ENCODE measurements at regions of chr14 and their contacts with region 1.

Region 1: DNA sequence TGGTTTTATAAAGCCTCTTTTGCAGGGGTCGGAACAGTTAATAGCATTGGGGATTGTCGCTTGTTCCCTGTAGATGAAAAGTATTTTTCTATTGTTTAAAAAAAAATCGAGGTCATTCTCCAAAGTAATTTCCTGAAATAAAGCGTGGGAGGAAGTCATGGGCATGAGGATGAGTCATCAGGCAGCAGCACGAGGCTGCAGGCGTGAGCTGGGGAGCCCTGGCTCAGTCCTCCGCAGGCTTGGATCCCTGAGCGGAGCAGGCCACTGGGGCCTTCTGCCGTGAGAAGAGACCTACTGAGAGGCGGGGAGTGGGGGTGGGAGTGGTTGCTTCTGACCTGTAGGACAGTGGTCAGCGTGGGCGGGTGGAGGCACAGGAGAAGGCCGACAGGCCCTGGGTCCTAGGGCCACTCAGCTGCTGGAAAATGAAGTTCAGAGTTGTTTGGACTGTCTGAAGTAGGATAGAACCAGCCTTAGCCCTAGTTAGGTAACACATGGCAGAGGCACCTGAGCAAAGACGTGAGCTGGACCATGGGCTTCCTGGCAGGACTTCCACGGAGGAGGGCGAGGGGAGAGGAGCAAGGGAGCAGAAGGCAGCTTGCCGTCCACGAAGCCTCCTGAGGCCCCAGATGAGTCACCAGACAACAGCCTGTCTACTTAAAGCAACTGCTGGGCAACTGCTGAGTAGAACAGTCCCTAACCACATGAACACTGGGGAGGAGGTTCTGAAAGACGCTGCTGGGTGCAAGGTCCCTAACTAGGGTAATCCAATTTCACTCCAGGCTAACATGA is 21.1 kb upstream of the LGALS3 start:
- DNase-seq: peak in 6 of 35 experiments; percentile 6 to 51 (median 28)
- ATAC-seq: peak; percentile 52 to 78 (median 66)
- H3K4me3 ChIP-seq: no peak overlapping the region
- H3K4me3 Mint-ChIP-seq: no peak overlapping the region
- H3K27ac ChIP-seq: peak overlapping the region; percentile 78
- H3K27ac Mint-ChIP-seq: peak overlapping the region; percentile 74 to 89
- H3K4me1 ChIP-seq: peaks cover 4 to 39% of the 10 kb centered on the region in 2 experiments
- H3K4me1 Mint-ChIP-seq: peaks cover 21 to 40% (median 33%) of the 10 kb centered on the region in 3 donors
- H3K27me3 ChIP-seq: no peaks in the 10 kb centered on the region
- H3K27me3 Mint-ChIP-seq: no peaks in the 10 kb centered on the region

Region 2: DNA sequence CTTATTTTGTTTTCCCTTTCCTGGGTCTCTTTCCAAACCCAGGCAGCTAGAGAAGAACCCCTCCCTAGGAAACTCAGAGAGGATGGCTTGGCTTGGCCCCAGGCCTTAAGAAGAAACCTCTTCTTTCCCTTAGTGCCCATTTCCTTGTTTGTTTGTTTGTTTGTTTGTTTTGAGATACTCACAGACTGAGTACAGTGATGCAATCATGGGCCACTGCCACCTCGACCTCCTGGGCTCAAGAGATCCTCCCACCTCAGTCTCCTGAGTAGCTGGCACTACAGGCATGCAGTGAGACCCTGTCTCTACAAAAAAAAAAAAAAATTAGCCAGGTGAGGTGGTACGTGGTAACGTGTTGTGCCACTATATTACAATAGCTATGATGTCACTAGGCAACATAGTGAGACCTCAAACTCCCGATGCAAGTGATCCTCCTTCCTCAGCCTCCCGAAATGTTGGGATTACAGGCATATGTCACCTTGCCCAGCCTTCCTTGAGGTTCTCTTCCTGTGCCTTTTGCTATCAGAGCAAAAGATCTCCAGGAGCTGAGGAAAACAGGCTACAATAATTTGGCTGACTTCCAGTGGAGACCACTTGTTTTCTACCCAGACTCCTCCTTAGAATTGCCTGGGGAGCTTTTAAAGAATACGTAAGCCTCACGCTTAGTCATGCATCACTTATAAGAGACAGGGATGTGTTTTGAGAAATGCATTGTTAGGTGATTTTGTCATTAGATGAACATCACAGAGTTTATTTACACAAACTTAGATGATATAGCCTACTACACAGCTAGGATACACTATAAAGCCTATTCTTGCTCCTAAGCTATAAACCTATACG is 13.4 kb before region 1 on chr14:
- CTCF ChIA-PET with region 1: interaction called, 8 to 14 read pairs
- POLR2A ChIA-PET with region 1: interaction called in 1 of 2 experiments, 3 read pairs
- DNase-seq: no peak
- ATAC-seq: no peak
- H3K4me3 ChIP-seq: no peak overlapping the region
- H3K4me3 Mint-ChIP-seq: no peak overlapping the region
- H3K27ac ChIP-seq: no peak overlapping the region
- H3K27ac Mint-ChIP-seq: no peak overlapping the region
- H3K4me1 ChIP-seq: peaks cover 0 to 17% of the 10 kb centered on the region in 2 experiments
- H3K4me1 Mint-ChIP-seq: peaks cover 9 to 20% (median 20%) of the 10 kb centered on the region in 3 donors
- H3K27me3 ChIP-seq: no peaks in the 10 kb centered on the region
- H3K27me3 Mint-ChIP-seq: no peaks in the 10 kb centered on the region

Region 3: DNA sequence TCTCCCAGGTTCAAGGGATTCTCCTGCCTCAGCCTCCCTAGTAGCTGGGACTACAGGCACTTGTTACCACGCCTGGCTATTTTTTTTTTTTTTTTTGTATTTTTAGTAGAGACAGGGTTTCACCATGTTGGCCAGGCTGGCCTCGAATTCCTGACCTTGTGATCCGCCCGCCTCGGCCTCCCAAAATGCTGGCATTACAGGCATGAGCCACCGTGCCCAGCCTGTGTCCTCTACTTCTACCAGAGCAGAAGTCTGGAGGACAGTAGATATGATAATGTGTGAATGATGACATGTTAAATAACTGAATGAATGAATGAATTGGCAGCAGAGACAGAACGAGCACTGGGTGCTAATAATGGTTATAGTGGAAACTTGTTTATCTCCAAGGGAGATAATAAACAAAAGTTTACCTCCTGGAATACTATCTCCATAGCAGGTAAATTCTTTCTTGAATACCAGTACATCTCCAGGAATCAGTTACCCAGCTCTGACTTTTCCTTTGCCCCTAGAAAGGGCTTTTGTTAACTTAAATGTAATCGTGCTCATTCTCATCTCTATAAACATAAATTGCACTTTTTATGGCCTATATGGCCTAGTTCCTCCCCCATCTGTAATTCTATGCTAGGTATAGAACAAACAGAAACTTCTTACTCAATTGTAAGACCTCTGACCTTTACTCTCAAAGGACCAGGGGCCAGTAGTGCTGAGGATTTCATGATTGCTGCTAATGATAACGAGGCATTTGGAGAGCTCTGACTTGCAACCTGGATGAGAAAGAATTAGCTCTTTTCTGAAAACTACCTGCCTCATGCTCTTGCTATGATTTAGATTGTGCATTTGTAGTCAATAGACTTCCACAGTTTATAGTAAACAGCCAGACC is 13.9 kb after region 1 on chr14:
- CTCF ChIA-PET with region 1: no interaction called
- POLR2A ChIA-PET with region 1: interaction called in 1 of 2 experiments, 16 read pairs
- DNase-seq: no peak
- ATAC-seq: no peak
- H3K4me3 ChIP-seq: no peak overlapping the region
- H3K4me3 Mint-ChIP-seq: no peak overlapping the region
- H3K27ac ChIP-seq: no peak overlapping the region
- H3K27ac Mint-ChIP-seq: no peak overlapping the region
- H3K4me1 ChIP-seq: peaks cover 0 to 12% of the 10 kb centered on the region in 2 experiments
- H3K4me1 Mint-ChIP-seq: peaks cover 8 to 15% (median 9%) of the 10 kb centered on the region in 3 donors
- H3K27me3 ChIP-seq: peaks cover 0 to 4% of the 10 kb centered on the region in 2 experiments
- H3K27me3 Mint-ChIP-seq: peaks cover 0 to 7% of the 10 kb centered on the region in 2 donors

Region 4: DNA sequence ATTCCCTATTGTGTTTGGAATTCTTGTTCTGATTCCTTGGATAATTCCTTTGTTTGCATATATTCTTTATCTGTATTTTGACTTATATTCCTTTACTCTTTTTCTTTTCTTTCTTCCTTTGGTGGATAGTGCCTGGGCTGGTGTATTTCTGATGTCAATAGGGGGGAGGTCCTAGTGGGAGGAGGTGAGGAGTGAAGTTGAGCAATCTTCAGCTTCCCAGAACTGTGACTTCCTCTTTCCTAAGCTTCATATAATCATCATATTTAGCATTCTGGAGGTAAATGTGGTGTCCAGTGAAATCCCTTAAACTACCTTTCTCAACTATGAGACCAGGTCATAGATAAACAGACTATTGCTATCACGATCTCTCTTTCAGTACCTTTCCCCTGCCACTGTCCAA is 362.1 kb after region 1 on chr14:
- CTCF ChIA-PET with region 1: no interaction called
- POLR2A ChIA-PET with region 1: no interaction called
- DNase-seq: no peak
- ATAC-seq: no peak
- H3K4me3 ChIP-seq: no peak overlapping the region
- H3K4me3 Mint-ChIP-seq: no peak overlapping the region
- H3K27ac ChIP-seq: no peak overlapping the region
- H3K27ac Mint-ChIP-seq: no peak overlapping the region
- H3K4me1 ChIP-seq: no peaks in the 10 kb centered on the region
- H3K4me1 Mint-ChIP-seq: no peaks in the 10 kb centered on the region
- H3K27me3 ChIP-seq: peaks cover 0 to 15% of the 10 kb centered on the region in 2 experiments
- H3K27me3 Mint-ChIP-seq: peaks cover 0 to 4% of the 10 kb centered on the region in 2 donors

Region 5: DNA sequence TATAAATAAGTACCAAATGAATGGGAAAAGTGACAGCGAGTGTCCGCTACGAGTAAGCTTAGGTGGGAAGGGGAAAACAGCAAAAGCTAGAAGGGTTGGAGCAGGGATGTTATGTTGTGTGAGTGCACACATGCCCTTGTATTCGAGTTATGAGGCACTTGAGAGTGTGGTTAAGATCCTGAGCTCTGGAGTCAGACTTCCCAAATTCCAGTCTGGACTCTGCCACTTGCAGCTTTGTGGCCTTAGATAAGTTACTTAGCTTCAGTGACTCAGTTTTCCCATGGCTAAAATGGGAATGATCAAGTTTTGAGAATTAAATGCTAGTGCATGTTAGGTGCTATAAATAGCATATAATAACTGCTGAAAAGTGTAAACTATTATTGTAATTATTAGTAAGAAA is 517.0 kb after region 1 on chr14:
- CTCF ChIA-PET with region 1: no interaction called
- POLR2A ChIA-PET with region 1: interaction called in 1 of 2 experiments, 10 read pairs
- DNase-seq: no peak
- ATAC-seq: no peak
- H3K4me3 ChIP-seq: no peak overlapping the region
- H3K4me3 Mint-ChIP-seq: no peak overlapping the region
- H3K27ac ChIP-seq: no peak overlapping the region
- H3K27ac Mint-ChIP-seq: peak overlapping the region in 1 of 2 donors; percentile 12
- H3K4me1 ChIP-seq: no peaks in the 10 kb centered on the region
- H3K4me1 Mint-ChIP-seq: peaks cover 5 to 15% (median 11%) of the 10 kb centered on the region in 3 donors
- H3K27me3 ChIP-seq: no peaks in the 10 kb centered on the region
- H3K27me3 Mint-ChIP-seq: no peaks in the 10 kb centered on the region

Region 6: DNA sequence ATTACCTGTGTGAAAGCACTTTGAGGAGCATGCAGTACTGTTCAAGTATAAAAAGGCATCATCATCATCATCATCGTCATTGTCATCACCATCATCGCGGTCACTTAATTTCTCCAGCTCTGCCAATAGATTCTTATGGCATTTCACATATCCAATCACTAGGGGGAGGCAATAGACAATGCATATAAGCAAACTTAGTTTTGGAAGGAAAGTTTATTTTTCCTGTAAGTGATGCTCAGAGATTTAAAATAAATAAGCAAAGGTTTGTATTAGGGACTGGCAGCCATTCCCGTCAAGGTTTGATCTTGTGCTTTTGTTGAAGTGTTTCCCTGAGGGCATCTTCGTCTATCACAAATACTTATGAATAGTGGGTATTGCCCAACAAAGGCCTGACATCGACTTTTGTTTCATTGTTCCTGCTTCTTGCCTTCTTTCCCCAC is 599.4 kb after region 1 on chr14:
- CTCF ChIA-PET with region 1: no interaction called
- POLR2A ChIA-PET with region 1: no interaction called
- DNase-seq: peak in 1 of 35 experiments; percentile 35
- ATAC-seq: no peak
- H3K4me3 ChIP-seq: no peak overlapping the region
- H3K4me3 Mint-ChIP-seq: no peak overlapping the region
- H3K27ac ChIP-seq: no peak overlapping the region
- H3K27ac Mint-ChIP-seq: no peak overlapping the region
- H3K4me1 ChIP-seq: no peaks in the 10 kb centered on the region
- H3K4me1 Mint-ChIP-seq: no peaks in the 10 kb centered on the region
- H3K27me3 ChIP-seq: no peaks in the 10 kb centered on the region
- H3K27me3 Mint-ChIP-seq: no peaks in the 10 kb centered on the region

Measured in T-cell (primary cell).